CD8-positive, alpha-beta memory T cell (primary cell): ENCODE measurements at regions of chr2 and their contacts with region 1.

Region 1: DNA sequence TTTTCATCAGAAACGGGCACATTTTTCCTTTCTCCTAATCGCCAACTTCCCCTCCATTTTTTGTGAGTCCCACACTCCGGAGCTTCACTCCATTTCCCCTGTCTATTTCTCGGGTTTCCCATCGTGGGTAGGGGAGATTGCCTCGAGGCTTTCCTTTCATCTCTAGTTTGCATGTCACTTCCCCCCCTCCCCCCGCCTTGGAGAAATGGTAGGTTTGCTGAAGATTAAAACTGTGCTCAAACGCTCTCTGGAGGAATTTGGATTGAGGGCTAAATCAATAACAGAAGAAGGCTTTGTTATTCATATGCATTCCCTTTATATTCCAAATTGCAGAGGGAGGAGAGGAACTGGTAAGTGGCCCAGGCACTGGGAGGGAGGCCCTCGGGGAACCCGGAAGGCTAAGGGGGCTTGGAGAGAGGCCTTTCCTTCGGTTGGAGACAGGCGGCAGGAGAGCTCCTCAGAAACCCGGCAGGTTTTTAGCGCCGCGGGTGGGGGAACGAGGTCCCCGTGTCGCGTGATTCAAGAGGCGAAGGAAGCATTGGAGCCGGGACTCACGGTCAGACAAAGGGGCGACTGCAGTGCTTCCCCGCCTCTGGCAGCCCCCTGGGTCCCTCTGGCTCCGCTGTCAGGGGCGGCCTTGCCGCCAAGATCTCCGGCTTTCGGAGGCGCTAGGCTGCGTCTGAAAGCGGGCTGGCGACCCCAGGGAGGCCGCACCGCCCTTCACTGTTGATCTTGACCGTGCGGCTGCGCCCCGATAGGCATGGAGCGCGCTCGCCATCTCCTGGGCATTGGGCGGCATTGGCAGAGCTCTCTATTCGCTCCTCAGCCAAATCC is 2.4 kb upstream of the HOXD12 start:
- DNase-seq: peak; percentile 40 to 62 (median 48)
- H3K4me3 ChIP-seq: peak overlapping the region; percentile 41
- H3K4me3 Mint-ChIP-seq: peak overlapping the region; percentile 63 to 94 (median 81)
- H3K27ac ChIP-seq: no peak overlapping the region
- H3K27ac Mint-ChIP-seq: peak overlapping the region in 4 of 8 donors; percentile 32 to 54 (median 46)
- H3K4me1 ChIP-seq: peaks cover 18% of the 10 kb centered on the region
- H3K4me1 Mint-ChIP-seq: peaks cover 23 to 34% (median 33%) of the 10 kb centered on the region in 3 donors
- H3K27me3 ChIP-seq: peaks cover 84% of the 10 kb centered on the region
- H3K27me3 Mint-ChIP-seq: peaks cover 85 to 86% of the 10 kb centered on the region in 2 donors

Region 2: GRCh38 chr2:175690113-175690837 is 406.9 kb before region 1 on chr2:
- CTCF ChIA-PET with region 1: interaction called, 36 read pairs
- POLR2A ChIA-PET with region 1: no interaction called
- DNase-seq: peak in 2 of 5 donors; percentile 1 to 22
- H3K4me3 ChIP-seq: no peak overlapping the region
- H3K4me3 Mint-ChIP-seq: no peak overlapping the region
- H3K27ac ChIP-seq: no peak overlapping the region
- H3K27ac Mint-ChIP-seq: no peak overlapping the region
- H3K4me1 ChIP-seq: no peaks in the 10 kb centered on the region
- H3K4me1 Mint-ChIP-seq: no peaks in the 10 kb centered on the region
- H3K27me3 ChIP-seq: no peaks in the 10 kb centered on the region
- H3K27me3 Mint-ChIP-seq: peaks cover 2 to 42% of the 10 kb centered on the region in 2 donors

Region 3: GRCh38 chr2:176056406-176056805 is 40.8 kb before region 1 on chr2:
- CTCF ChIA-PET with region 1: no interaction called
- POLR2A ChIA-PET with region 1: no interaction called
- DNase-seq: no peak
- H3K4me3 ChIP-seq: no peak overlapping the region
- H3K4me3 Mint-ChIP-seq: no peak overlapping the region
- H3K27ac ChIP-seq: no peak overlapping the region
- H3K27ac Mint-ChIP-seq: no peak overlapping the region
- H3K4me1 ChIP-seq: no peaks in the 10 kb centered on the region
- H3K4me1 Mint-ChIP-seq: no peaks in the 10 kb centered on the region
- H3K27me3 ChIP-seq: no peaks in the 10 kb centered on the region
- H3K27me3 Mint-ChIP-seq: peaks cover 16 to 61% of the 10 kb centered on the region in 2 donors